ENCODE measurements at regions of chr12 and their contacts with region 1.

Region 1: GRCh38 chr12:104339663-104340062 is 36.1 kb downstream of the EID3 start:
- DNase-seq: no peak
- ATAC-seq: no peak
- H3K4me3 ChIP-seq: no peak overlapping the region
- H3K27ac ChIP-seq: no peak overlapping the region
- H3K4me1 ChIP-seq: peaks cover 29% of the 10 kb centered on the region
- H3K27me3 ChIP-seq: no peaks in the 10 kb centered on the region
- CTCF ChIP-seq: no peak

Region 2: DNA sequence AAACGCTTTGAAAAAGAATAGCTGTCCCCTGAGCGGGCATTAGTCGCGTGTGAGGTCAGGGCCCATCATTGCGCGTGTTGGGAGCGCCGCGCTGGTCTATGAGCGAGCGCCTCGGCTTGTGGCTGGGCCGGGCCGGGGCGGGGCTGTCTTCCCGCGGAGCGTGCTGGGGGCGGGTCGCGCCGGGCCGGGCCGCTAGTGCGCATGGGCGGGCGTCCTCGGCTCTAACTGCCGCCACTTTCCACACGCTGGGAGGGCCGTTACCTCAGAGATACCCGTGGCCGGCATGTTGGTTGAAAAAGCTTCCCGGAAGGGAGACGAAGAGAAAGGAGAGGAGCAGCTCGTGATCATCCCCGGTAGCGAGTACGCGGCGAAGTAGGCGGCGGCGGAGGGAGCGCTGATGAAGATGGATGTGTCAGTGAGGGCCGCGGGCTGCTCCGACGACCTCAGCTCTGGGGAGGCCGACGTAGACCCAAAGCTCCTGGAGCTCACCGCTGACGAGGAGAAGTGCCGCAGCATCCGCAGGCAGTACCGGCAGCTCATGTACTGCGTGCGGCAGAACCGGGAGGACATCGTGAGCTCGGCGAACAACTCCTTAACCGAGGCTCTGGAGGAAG is 36.0 kb before region 1 on chr12 and contains the start of gene EID3:
- intact Hi-C with region 1: loop called in 1 of 2 experiments (anchors 5 kb)
- DNase-seq: peak; percentile 92 to 96
- ATAC-seq: peak; percentile 98 to 100 (median 99)
- H3K4me3 ChIP-seq: peak within 1 kb of the TSS; percentile 61
- H3K27ac ChIP-seq: peak within 1 kb of the TSS; percentile 82
- H3K4me1 ChIP-seq: peaks cover 77% of the 10 kb centered on the region
- H3K27me3 ChIP-seq: no peaks in the 10 kb centered on the region
- CTCF ChIP-seq: no peak
- total RNA-seq, gene EID3: 0.94 to 1.3 (median 0.99) TPM

Region 3: DNA sequence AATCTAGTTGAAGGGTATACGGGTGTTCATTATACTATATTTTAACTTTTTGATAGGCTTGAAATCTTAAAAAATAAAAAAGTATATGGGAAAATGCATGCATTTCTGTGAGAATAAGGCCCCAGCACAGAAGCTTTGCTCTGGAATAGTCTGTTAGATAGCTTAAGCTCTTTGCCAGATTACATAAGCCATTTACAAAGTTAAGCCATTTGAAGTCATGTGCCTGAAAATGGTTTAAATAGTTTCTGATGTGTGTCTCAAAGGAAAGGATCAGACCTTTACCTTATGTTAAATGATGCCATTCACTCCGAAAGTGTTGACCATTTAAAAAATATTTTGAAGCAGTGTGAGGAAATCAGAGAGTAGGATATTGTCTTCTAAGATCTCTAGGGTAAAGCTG is 819.2 kb after region 1 on chr12:
- intact Hi-C with region 1: loop called in 1 of 2 experiments (anchors 10 kb)
- DNase-seq: no peak
- ATAC-seq: no peak
- H3K4me3 ChIP-seq: no peak overlapping the region
- H3K27ac ChIP-seq: no peak overlapping the region
- H3K4me1 ChIP-seq: no peaks in the 10 kb centered on the region
- H3K27me3 ChIP-seq: no peaks in the 10 kb centered on the region
- CTCF ChIP-seq: no peak

Measured in psoas muscle (tissue), 8 donors.